Dorsolateral prefrontal cortex (tissue), 120 donors: ENCODE measurements at regions of chr9 and their contacts with region 1.

Region 1: DNA sequence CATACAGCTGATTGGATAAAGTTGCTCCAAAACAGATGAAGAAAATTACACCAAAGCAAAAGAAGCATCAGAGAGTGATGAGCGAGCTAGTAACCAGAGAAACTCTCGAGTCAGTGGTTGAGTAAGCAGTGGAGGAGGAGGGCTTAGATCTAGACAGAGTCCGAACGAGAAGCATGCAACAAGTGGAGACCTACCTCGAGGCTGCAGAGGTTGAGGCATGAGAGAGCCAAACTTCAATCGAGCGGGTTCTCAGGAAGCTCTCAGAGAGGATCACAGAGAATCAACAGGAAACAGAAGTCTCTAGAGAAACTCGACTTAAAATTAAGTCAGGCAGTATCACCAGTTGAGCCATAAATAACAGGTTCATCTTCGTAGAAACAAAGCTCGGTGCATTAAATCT is 6.1 kb downstream of the RUSC2 start:
- DNase-seq: no peak
- H3K4me3 ChIP-seq: no peak overlapping the region
- H3K27ac ChIP-seq: no peak overlapping the region
- H3K27me3 ChIP-seq: no peaks in the 10 kb centered on the region
- CTCF ChIP-seq: no peak

Region 2: GRCh38 chr9:34809504-34810186 is 686.3 kb before region 1 on chr9:
- intact Hi-C with region 1: no loop called
- DNase-seq: peak in 2 of 10 donors; percentile 15 to 49
- H3K4me3 ChIP-seq: peak overlapping the region in 51 of 59 donors; percentile 5 to 55 (median 39)
- H3K27ac ChIP-seq: no peak overlapping the region
- H3K27me3 ChIP-seq: peaks cover 0 to 39% (median 4%) of the 10 kb centered on the region in 45 donors
- CTCF ChIP-seq: peak in 26 of 56 donors; percentile 7 to 40 (median 26)

Region 3: GRCh38 chr9:35056571-35057270 is 439.3 kb before region 1 on chr9:
- intact Hi-C with region 1: no loop called
- DNase-seq: no peak
- H3K4me3 ChIP-seq: no peak overlapping the region
- H3K27ac ChIP-seq: no peak overlapping the region
- H3K27me3 ChIP-seq: no peaks in the 10 kb centered on the region
- CTCF ChIP-seq: no peak

Region 4: GRCh38 chr9:35448496-35448895 is 47.5 kb before region 1 on chr9:
- intact Hi-C with region 1: no loop called
- DNase-seq: no peak
- H3K4me3 ChIP-seq: no peak overlapping the region
- H3K27ac ChIP-seq: no peak overlapping the region
- H3K27me3 ChIP-seq: peaks cover 0 to 1% (median 0%) of the 10 kb centered on the region in 45 donors
- CTCF ChIP-seq: no peak

Region 5: GRCh38 chr9:35518226-35518821 is 22.3 kb after region 1 on chr9:
- intact Hi-C with region 1: loop called in 1 of 2 experiments (anchors 2 kb)
- DNase-seq: no peak
- H3K4me3 ChIP-seq: no peak overlapping the region
- H3K27ac ChIP-seq: peak overlapping the region; percentile 54 to 99 (median 95)
- H3K27me3 ChIP-seq: no peaks in the 10 kb centered on the region
- CTCF ChIP-seq: no peak